ENCODE measurements at regions of chr6 and their contacts with region 1.

Region 1: DNA sequence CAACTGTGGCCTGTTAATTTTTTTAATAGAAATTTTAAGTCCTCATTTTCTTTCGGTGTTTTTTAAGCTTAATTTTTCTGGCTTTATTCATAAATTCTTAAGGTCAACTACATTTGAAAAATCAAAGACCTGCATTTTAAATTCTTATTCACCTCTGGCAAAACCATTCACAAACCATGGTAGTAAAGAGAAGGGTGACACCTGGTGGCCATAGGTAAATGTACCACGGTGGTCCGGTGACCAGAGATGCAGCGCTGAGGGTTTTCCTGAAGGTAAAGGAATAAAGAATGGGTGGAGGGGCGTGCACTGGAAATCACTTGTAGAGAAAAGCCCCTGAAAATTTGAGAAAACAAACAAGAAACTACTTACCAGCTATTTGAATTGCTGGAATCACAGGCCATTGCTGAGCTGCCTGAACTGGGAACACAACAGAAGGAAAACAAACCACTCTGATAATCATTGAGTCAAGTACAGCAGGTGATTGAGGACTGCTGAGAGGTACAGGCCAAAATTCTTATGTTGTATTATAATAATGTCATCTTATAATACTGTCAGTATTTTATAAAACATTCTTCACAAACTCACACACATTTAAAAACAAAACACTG is 10.1 kb downstream of the HFE start:
- DNase-seq: peak in 4 of 5 donors; percentile 43 to 58 (median 50)
- ATAC-seq: peak; percentile 56 to 87 (median 86)
- H3K4me3 ChIP-seq: no peak overlapping the region
- H3K27ac ChIP-seq: no peak overlapping the region
- H3K4me1 ChIP-seq: peaks cover 0 to 16% (median 0%) of the 10 kb centered on the region in 12 donors
- H3K27me3 ChIP-seq: no peaks in the 10 kb centered on the region
- CTCF ChIP-seq: peak; percentile 69 to 85 (median 78)
- POLR2A ChIP-seq: no peak

Region 2: GRCh38 chr6:25788305-25788922 is 309.0 kb before region 1 on chr6:
- intact Hi-C with region 1: no loop called
- DNase-seq: peak in 2 of 5 donors; percentile 21 to 26
- ATAC-seq: peak in 2 of 4 donors; percentile 36 to 39
- H3K4me3 ChIP-seq: no peak overlapping the region
- H3K27ac ChIP-seq: no peak overlapping the region
- H3K4me1 ChIP-seq: no peaks in the 10 kb centered on the region
- H3K27me3 ChIP-seq: no peaks in the 10 kb centered on the region
- CTCF ChIP-seq: peak in 10 of 12 donors; percentile 22 to 46 (median 38)
- POLR2A ChIP-seq: no peak

Region 3: GRCh38 chr6:26065952-26066380 is 31.4 kb before region 1 on chr6:
- intact Hi-C with region 1: loop called (anchors 1 to 2 kb)
- DNase-seq: peak in 4 of 5 donors; percentile 47 to 57 (median 48)
- ATAC-seq: peak; percentile 82 to 93 (median 92)
- H3K4me3 ChIP-seq: peak overlapping the region in 2 of 12 donors; percentile 1 to 10
- H3K27ac ChIP-seq: peak overlapping the region in 2 of 12 donors; percentile 9
- H3K4me1 ChIP-seq: peaks cover 0 to 8% (median 0%) of the 10 kb centered on the region in 12 donors
- H3K27me3 ChIP-seq: no peaks in the 10 kb centered on the region
- CTCF ChIP-seq: peak; percentile 68 to 93 (median 80)
- POLR2A ChIP-seq: no peak

Measured in heart left ventricle (tissue), 16 donors.